ENCODE measurements at regions of chr13 and their contacts with region 1.

Region 1: GRCh38 chr13:43303033-43303729 is 279.8 kb downstream of the DNAJC15 start:
- DNase-seq: peak; percentile 59
- H3K4me3 Mint-ChIP-seq: no peak overlapping the region
- H3K27ac Mint-ChIP-seq: no peak overlapping the region
- H3K4me1 Mint-ChIP-seq: no peaks in the 10 kb centered on the region
- H3K27me3 Mint-ChIP-seq: peaks cover 13% of the 10 kb centered on the region
- CTCF ChIP-seq: no peak

Region 2: GRCh38 chr13:43107780-43108179 is 195.4 kb before region 1 on chr13:
- CTCF ChIA-PET with region 1: no interaction called
- intact Hi-C with region 1: no loop called
- DNase-seq: no peak
- H3K4me3 Mint-ChIP-seq: no peak overlapping the region
- H3K27ac Mint-ChIP-seq: no peak overlapping the region
- H3K4me1 Mint-ChIP-seq: no peaks in the 10 kb centered on the region
- H3K27me3 Mint-ChIP-seq: no peaks in the 10 kb centered on the region
- CTCF ChIP-seq: no peak

Region 3: GRCh38 chr13:43572656-43573367 is 269.6 kb after region 1 on chr13:
- CTCF ChIA-PET with region 1: no interaction called
- intact Hi-C with region 1: loop called (anchors 10 kb)
- DNase-seq: no peak
- H3K4me3 Mint-ChIP-seq: peak overlapping the region; percentile 44
- H3K27ac Mint-ChIP-seq: peak overlapping the region; percentile 79
- H3K4me1 Mint-ChIP-seq: peaks cover 49% of the 10 kb centered on the region
- H3K27me3 Mint-ChIP-seq: no peaks in the 10 kb centered on the region
- CTCF ChIP-seq: no peak

Region 4: DNA sequence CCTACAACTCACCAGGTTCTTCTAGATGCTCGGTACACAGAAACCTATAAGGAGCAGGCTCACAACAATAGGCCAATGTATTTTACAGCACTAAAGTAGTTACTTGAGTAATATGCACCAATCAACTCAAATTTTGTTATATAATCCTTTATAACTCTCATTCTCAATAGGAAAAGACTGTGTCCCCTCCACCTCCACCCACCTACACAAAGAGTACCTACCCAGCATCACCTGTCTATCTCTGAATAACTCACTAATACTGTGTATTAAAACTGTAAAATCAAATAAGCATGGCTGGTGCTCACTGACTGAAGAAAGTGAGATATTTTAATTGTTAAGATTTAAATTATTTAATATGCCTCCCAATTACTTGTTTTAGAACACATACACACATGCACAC is 337.3 kb after region 1 on chr13:
- CTCF ChIA-PET with region 1: no interaction called
- intact Hi-C with region 1: no loop called
- DNase-seq: no peak
- H3K4me3 Mint-ChIP-seq: no peak overlapping the region
- H3K27ac Mint-ChIP-seq: no peak overlapping the region
- H3K4me1 Mint-ChIP-seq: no peaks in the 10 kb centered on the region
- H3K27me3 Mint-ChIP-seq: no peaks in the 10 kb centered on the region
- CTCF ChIP-seq: no peak

Region 5: DNA sequence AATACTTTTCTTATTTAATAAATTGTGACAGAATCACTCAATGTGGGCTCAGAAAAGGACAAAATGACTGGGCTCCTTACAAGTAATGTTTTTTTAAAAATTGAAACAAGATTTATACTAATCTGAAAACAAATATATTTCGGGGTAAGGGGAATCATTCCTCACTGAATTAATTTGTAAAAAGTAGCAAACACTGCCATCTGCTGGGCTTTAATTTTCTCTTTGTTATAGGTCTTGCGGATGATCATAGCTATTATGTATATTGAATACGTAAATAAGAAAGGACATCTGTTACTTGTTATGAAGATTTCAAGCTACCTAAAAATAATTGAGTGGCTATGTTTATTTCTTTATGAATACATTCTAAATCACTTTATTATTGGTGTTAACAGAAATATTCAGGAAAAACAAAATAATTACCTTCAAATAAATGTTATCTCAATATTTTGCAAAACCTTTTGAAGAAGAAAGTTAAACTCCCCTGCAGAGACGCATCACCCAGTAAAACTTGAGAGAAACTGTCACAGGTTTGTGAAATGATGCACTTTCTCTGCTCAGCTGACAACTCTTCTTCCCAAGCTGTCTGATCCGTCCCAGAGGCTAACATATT is 501.4 kb after region 1 on chr13:
- CTCF ChIA-PET with region 1: interaction called, 10 read pairs
- intact Hi-C with region 1: loop called (anchors 1 kb)
- DNase-seq: peak; percentile 31
- H3K4me3 Mint-ChIP-seq: no peak overlapping the region
- H3K27ac Mint-ChIP-seq: no peak overlapping the region
- H3K4me1 Mint-ChIP-seq: peaks cover 10% of the 10 kb centered on the region
- H3K27me3 Mint-ChIP-seq: peaks cover 12% of the 10 kb centered on the region
- CTCF ChIP-seq: no peak

Region 6: DNA sequence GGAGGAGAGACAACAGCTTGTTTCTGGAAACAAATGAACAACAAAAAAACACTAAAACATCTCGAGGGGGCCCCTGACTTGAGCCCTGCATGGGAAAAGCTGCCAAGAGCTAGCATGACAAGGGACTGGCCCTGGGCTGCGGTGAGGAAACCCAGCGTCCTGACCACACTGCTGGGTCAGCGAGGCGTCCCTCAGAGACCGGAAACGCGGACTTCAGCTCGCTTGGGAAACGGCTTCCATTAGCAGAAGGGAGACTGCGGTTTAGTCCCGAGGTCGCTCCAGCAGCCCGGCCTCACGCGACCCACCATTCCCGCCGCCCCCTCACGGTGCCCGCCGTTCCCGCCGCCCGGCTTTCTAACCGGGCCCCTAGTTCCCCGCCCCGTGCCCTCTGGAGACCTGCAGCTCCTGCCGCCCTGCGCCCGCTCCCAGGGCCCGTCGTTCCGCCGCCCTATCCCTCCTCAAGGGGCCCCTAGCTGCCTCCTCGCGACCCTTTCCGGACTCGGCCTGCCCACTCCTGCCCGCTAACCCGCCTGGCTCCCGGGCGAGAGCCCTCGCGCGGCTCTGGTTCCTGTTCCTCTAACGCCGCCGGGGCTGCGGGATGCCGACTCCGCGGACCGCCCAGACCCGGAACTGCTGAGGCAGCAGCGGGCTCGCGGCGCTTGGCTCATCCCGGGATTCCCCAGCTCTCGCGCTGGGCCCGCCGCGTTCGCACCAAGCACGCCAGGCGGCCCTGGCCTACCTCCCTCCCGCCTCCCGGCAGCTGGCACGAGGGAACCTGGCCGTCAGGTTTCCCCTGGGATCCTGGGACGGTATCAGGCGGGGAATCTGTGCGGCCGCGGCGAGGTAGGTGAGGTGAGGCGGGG is 575.9 kb after region 1 on chr13 and contains the start of gene CCDC122:
- CTCF ChIA-PET with region 1: no interaction called
- intact Hi-C with region 1: loop called (anchors 10 kb)
- DNase-seq: peak; percentile 79
- H3K4me3 Mint-ChIP-seq: peak within 1 kb of the TSS; percentile 96
- H3K27ac Mint-ChIP-seq: peak within 1 kb of the TSS; percentile 84
- H3K4me1 Mint-ChIP-seq: peaks cover 24% of the 10 kb centered on the region
- H3K27me3 Mint-ChIP-seq: no peaks in the 10 kb centered on the region
- CTCF ChIP-seq: no peak
- total RNA-seq, gene CCDC122: 6.1 and 6.2 TPM in 2 replicates

Measured in Calu3 (cell line).